ENCODE measurements at regions of chr10 and their contacts with region 1.

Region 1: GRCh38 chr10:122435212-122435827 is 19.1 kb upstream of the ARMS2 start:
- DNase-seq: no peak
- H3K4me3 Mint-ChIP-seq: no peak overlapping the region
- H3K27ac Mint-ChIP-seq: no peak overlapping the region
- H3K4me1 Mint-ChIP-seq: no peaks in the 10 kb centered on the region
- H3K27me3 Mint-ChIP-seq: no peaks in the 10 kb centered on the region

Region 2: GRCh38 chr10:122267849-122268737 is 167.2 kb before region 1 on chr10:
- CTCF ChIA-PET with region 1: interaction called, 10 read pairs
- DNase-seq: peak; percentile 61
- H3K4me3 Mint-ChIP-seq: no peak overlapping the region
- H3K27ac Mint-ChIP-seq: no peak overlapping the region
- H3K4me1 Mint-ChIP-seq: no peaks in the 10 kb centered on the region
- H3K27me3 Mint-ChIP-seq: peaks cover 4% of the 10 kb centered on the region

Region 3: GRCh38 chr10:122298598-122299301 is 136.6 kb before region 1 on chr10:
- CTCF ChIA-PET with region 1: interaction called, 54 read pairs
- DNase-seq: peak; percentile 76
- H3K4me3 Mint-ChIP-seq: no peak overlapping the region
- H3K27ac Mint-ChIP-seq: no peak overlapping the region
- H3K4me1 Mint-ChIP-seq: peaks cover 14% of the 10 kb centered on the region
- H3K27me3 Mint-ChIP-seq: peaks cover 30% of the 10 kb centered on the region

Region 4: DNA sequence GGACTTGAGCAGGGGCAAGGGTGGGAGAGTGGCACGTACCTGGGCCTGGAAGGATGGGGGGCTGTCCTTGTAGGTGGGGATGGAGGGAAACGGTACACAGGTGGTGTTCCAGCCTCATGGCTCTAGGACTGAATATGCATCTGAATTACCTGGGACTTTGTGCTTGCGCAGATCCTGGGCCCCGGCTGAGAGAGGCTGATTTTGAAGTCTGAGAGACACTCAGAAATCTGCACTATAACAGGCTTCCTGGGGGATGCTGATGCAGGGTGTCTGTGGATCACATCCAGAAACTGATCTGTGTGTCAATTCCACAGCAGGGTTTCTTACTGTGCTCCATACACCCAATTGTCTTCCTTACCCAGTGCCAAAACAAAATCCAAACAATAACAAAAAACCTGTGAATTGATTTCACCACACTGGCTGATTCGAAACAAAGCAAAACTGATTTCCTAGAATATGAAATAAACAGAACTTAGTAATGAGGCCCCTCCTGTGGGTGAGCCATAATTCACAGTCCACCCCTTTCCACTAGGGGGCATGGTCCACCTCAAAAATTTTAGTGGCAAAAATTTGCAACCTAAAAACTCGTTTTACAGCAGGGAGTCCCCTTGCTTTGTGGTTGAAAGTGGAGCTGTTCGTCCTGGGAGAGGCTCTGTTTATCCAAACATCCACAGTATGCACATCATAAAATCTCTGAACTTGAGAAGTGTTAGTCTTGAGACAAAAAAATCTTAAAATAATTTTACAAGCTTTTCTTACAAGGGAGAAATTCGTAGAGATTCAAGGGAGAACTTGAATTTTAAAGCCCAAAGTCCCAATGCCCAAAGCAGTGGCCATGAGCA is 92.8 kb before region 1 on chr10:
- CTCF ChIA-PET with region 1: interaction called, 49 read pairs
- DNase-seq: peak; percentile 70
- H3K4me3 Mint-ChIP-seq: no peak overlapping the region
- H3K27ac Mint-ChIP-seq: no peak overlapping the region
- H3K4me1 Mint-ChIP-seq: peaks cover 2% of the 10 kb centered on the region
- H3K27me3 Mint-ChIP-seq: peaks cover 11% of the 10 kb centered on the region

Region 5: GRCh38 chr10:122419876-122420623 is 15.3 kb before region 1 on chr10:
- CTCF ChIA-PET with region 1: interaction called, 10 read pairs
- DNase-seq: no peak
- H3K4me3 Mint-ChIP-seq: no peak overlapping the region
- H3K27ac Mint-ChIP-seq: no peak overlapping the region
- H3K4me1 Mint-ChIP-seq: peaks cover 71% of the 10 kb centered on the region
- H3K27me3 Mint-ChIP-seq: no peaks in the 10 kb centered on the region

Region 6: DNA sequence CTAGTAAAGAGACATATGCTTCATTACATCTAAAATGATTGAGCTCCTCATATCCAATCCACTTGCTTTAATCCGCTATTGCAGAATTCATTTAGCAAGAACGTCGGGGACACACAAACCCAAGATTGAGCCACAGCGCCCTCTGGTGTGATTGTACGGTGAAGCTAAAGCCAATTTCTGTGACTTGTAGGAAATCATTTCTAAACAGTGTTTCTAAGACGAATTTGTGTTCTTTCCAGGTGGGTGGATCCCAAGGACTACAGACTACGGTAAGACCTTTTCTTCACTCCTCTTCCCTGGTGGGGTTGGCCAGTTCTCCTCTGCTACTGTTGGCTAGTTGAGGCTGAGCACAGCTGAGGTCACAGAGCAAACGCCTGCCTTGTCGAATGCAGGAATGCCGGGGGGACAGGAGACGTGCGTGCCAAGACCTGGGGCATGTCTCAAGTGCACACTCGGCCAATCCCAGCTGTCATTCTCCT is 130.4 kb after region 1 on chr10:
- CTCF ChIA-PET with region 1: interaction called, 19 read pairs
- DNase-seq: peak; percentile 79
- H3K4me3 Mint-ChIP-seq: no peak overlapping the region
- H3K27ac Mint-ChIP-seq: no peak overlapping the region
- H3K4me1 Mint-ChIP-seq: no peaks in the 10 kb centered on the region
- H3K27me3 Mint-ChIP-seq: peaks cover 42% of the 10 kb centered on the region

Measured in activated naive CD4-positive, alpha-beta T cell treated with anti-CD3 and anti-CD28 coated beads, Interleukin-2, amount 10 ng/mL, durations not matched to agents 7 days and 5 days (primary cell).